ENCODE measurements at regions of chr14 and their contacts with region 1.

Region 1: GRCh38 chr14:101770183-101770582 is 8.7 kb downstream of the PPP2R5C start:
- DNase-seq: no peak
- H3K4me3 ChIP-seq: no peak overlapping the region
- H3K27me3 ChIP-seq: no peaks in the 10 kb centered on the region; the same call in 1 of the 2 replicates
- CTCF ChIP-seq: no peak

Region 2: DNA sequence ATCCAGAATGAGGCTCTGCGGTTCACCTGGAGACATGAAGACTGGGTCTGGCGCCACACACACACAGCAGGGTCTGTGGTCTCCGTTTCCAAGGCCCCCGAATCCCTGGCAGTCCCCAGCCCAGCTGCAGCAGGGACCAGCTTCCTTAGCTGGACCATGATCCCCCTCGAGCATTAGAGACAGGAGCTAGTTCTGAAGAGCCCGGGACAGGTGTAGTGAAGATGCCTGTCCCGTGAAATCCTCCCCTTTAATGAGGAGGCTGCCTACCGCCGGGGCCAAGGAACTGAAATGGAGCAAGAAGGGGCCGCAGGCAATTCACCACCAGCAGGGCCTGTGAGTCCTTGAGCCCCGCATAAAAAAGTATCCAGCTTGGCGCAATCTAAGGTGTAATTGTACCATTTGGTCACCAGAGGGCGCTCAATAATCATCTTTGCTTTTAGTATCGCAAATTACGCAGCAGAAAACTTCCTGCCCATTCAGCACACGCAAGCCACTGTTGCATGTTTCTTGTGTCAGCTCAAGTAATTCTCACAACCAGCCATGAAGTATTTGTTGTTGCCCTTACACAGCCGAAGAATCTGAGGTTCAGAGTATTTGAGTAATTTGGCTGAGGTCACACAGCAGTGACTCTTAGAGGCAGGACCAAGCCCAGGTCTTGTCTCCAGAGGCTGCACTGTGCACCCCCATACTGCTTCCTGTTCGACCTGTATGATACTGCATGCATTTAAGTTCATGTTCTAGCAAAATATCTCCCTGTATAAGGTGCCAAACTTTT is 62.9 kb before region 1 on chr14:
- CTCF ChIA-PET with region 1: interaction called, 16 read pairs
- POLR2A ChIA-PET with region 1: no interaction called
- DNase-seq: no peak
- H3K4me3 ChIP-seq: no peak overlapping the region
- H3K27me3 ChIP-seq: peaks cover 6% of the 10 kb centered on the region
- CTCF ChIP-seq: peak; percentile 72

Region 3: DNA sequence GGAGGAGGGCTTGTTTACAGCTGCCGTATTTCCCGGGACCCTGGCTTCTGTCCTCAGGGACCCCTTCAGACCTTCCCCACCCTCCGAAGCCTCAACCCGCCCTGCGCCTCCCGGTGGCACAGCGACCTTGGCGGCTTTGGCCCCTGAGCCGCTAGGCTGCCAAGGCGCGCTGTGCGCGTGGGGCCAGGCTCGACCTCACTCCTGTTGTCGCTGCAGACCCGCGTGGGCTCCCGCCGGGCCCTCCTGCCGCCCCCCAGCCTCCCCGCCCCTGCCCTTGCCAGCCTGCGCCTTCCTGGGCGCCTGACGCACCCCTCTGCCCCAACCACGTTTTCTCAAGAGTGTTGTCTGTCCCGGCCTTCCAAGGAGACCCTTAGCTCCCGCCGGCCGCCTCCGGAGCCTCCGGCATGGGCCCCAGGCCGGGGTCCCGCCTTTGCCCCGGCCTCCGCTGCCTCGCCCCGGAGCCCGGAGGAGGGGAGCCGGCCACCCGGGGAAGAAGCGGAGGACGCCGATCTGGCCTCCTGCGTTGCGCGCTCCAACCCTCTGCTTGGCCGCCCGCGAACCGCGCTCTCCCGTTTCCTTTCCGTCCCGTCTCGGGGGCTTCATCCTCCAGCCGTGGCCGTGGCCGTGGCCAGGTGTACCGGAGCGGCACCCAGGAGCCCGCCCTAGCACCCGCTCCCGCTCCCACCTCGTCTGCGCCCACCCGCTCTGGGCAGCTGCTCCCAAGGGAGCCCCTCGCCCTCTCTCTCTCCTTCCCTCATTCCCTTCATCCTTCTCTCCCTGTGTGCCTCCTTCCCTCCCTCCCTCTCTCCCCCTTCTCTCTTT is 11.3 kb after region 1 on chr14:
- CTCF ChIA-PET with region 1: interaction called, 11 read pairs
- POLR2A ChIA-PET with region 1: no interaction called
- DNase-seq: no peak
- H3K4me3 ChIP-seq: peak overlapping the region; percentile 24
- H3K27me3 ChIP-seq: peaks cover 19% of the 10 kb centered on the region
- CTCF ChIP-seq: no peak

Region 4: GRCh38 chr14:101809671-101810514 is 39.7 kb after region 1 on chr14:
- CTCF ChIA-PET with region 1: interaction called, 12 read pairs
- POLR2A ChIA-PET with region 1: interaction called, 5 read pairs
- DNase-seq: peak; percentile 79
- H3K4me3 ChIP-seq: peak overlapping the region; percentile 67
- H3K27me3 ChIP-seq: no peaks in the 10 kb centered on the region
- CTCF ChIP-seq: no peak

Region 5: DNA sequence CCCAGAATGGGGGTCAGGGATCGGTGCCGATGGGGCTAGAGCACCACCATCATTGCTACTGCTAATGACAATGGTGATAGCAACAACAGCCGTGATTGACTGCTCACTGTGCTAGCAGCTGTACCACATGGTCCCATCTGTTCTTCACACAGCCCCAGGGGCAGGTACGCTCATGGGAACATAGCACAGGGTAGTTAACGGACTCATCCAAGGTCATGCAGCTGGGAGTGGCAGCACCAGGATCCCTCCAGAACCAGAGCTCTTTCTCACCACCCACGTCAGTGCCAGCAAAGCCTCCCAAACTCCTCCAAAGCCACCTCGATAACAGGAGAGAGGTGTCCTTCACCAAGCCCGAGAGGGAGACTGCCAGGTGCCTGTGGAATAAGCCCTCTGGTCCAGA is 183.0 kb after region 1 on chr14:
- CTCF ChIA-PET with region 1: interaction called, 16 read pairs
- POLR2A ChIA-PET with region 1: no interaction called
- DNase-seq: no peak
- H3K4me3 ChIP-seq: no peak overlapping the region
- H3K27me3 ChIP-seq: no peaks in the 10 kb centered on the region
- CTCF ChIP-seq: no peak

Region 6: GRCh38 chr14:101961011-101961721 is 191.0 kb after region 1 on chr14:
- CTCF ChIA-PET with region 1: interaction called, 11 read pairs
- POLR2A ChIA-PET with region 1: no interaction called
- DNase-seq: no peak
- H3K4me3 ChIP-seq: no peak overlapping the region
- H3K27me3 ChIP-seq: no peaks in the 10 kb centered on the region
- CTCF ChIP-seq: peak; percentile 96